GM12878 (cell line): ENCODE measurements at regions of chr11 and their contacts with region 1.

Region 1: DNA sequence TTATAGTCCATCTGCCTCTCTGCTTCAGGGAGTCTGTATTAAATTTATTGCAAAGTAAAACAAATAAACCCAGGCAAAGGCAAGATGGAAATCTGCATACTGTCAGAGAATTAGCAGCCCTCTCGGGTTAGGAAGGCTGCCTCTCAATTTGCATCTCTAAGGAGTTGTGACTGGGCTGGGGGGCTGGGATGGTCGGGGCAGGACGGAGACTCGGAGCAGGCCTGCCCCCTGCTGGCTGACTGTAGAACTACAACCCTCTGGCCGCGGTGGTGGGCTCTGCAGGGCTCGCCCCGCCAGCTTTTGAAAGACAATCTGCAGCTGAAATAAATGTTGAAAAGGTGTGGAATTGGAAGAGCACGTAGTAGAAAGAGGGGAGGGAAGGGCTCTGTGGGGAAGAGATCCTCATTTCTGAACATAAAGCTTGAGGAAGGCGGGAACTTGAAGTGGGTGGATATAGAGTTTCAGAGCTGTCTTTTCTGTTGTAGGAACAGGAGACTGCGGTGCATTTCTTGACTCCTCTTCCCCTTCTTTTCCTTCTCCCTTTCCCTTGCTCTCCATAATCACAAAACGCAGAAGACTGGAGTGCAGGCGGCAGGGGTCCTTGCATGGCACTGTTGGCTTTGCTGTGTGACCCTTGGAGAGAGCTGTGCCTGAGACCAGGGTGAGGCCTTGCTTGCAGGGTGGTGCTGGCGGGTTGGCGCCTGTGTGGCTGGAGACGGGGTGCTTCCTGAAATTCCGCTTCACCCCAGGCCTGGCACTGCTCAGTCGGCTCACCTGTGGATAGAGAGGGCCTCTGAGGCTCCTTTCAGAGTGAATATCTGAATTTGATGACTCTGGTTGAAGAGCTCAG is 22.6 kb upstream of the PKNOX2 start:
- DNase-seq: no peak
- ATAC-seq: peak; percentile 98
- H3K4me3 ChIP-seq: no peak overlapping the region
- H3K27ac ChIP-seq: no peak overlapping the region
- H3K4me1 ChIP-seq: no peaks in the 10 kb centered on the region
- H3K27me3 ChIP-seq: peaks cover 0 to 2% of the 10 kb centered on the region in 2 experiments; a peak in 1 of 4 replicates
- CTCF ChIP-seq: peak; percentile 88 to 94 (median 92)
- EP300 ChIP-seq: no peak
- POLR2A ChIP-seq: no peak
- RAD21 ChIP-seq: peak; percentile 78

Region 2: GRCh38 chr11:124882339-124883071 is 259.4 kb before region 1 on chr11:
- CTCF ChIA-PET with region 1: no interaction called
- POLR2A ChIA-PET with region 1: no interaction called
- RAD21 ChIA-PET with region 1: no interaction called
- SMC1A ChIA-PET with region 1: no interaction called
- in situ Hi-C with region 1: no loop called
- intact Hi-C with region 1: loop called (anchors 10 kb)
- DNase-seq: no peak
- ATAC-seq: no peak
- H3K4me3 ChIP-seq: no peak overlapping the region
- H3K27ac ChIP-seq: no peak overlapping the region
- H3K4me1 ChIP-seq: no peaks in the 10 kb centered on the region
- H3K27me3 ChIP-seq: peaks cover 0 to 4% of the 10 kb centered on the region in 2 experiments; a peak in 1 of 4 replicates
- CTCF ChIP-seq: no peak
- EP300 ChIP-seq: no peak
- POLR2A ChIP-seq: no peak
- RAD21 ChIP-seq: no peak

Region 3: DNA sequence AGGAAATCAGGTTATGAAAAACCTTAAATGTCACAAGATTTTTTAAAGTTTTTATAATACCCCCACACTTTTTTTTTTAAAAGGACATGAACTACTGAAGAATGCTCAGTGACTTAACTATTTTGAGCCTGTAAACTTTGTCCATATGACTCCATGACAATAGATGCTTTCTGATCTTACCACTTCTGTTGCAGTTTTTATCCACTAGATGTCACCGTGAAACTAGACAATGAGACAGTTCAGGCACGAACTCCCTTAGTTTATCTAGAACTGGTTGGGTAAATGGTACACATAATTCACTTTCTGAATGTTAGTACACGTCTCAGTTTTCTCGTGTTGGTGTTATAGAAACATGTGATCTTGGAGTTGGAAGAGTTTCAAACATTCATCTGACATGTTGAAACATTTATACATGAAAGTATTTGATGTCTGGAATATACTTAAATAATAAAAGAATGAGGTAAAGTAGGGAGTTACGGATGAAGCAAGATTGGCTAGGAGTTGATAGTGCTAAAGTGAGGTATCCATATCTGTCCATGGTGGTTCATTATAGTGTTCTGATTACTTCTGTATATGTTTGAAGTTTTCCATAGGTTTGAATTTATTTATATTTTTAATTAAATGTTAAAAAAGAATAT is 179.8 kb before region 1 on chr11:
- CTCF ChIA-PET with region 1: interaction called, 61 read pairs
- POLR2A ChIA-PET with region 1: no interaction called
- RAD21 ChIA-PET with region 1: interaction called, 32 read pairs
- SMC1A ChIA-PET with region 1: interaction called, 52 read pairs
- in situ Hi-C with region 1: loop called (anchors 10 kb)
- intact Hi-C with region 1: loop called (anchors 1 kb)
- DNase-seq: peak; percentile 51
- ATAC-seq: peak; percentile 97
- H3K4me3 ChIP-seq: no peak overlapping the region
- H3K27ac ChIP-seq: no peak overlapping the region
- H3K4me1 ChIP-seq: no peaks in the 10 kb centered on the region
- H3K27me3 ChIP-seq: no peaks in the 10 kb centered on the region
- CTCF ChIP-seq: peak; percentile 67 to 91 (median 74); a peak in 5 of 6 replicates
- EP300 ChIP-seq: no peak
- POLR2A ChIP-seq: no peak
- RAD21 ChIP-seq: peak; percentile 97

Region 4: DNA sequence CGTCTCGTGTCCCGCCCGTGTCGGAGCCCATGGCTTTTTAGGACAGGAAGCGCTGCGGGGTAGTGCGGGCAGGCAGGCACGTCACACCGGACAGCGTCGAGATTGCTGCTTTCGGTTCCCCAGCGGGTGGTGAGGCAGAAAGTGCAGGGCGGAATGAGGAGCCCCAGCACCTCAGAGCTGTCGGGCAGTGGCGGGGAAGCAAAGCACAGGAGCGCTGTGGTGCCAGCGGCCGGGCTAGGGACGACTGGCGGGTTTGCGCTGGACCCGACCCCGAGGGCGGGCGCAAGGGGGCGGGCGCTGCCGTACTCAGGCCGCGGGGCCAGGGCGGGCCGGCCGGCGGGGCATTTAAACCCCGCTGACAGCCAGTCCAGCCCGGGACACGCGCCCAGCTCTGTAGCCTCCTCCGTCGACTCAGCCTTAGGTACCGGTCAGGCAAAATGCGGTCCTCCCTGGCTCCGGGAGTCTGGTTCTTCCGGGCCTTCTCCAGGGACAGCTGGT is 78.9 kb before region 1 on chr11 and contains the start of gene SLC37A2:
- CTCF ChIA-PET with region 1: interaction called, 12 read pairs
- POLR2A ChIA-PET with region 1: no interaction called
- RAD21 ChIA-PET with region 1: interaction called, 5 read pairs
- SMC1A ChIA-PET with region 1: interaction called, 8 read pairs
- in situ Hi-C with region 1: no loop called
- intact Hi-C with region 1: loop called (anchors 5 kb)
- DNase-seq: peak; percentile 62
- ATAC-seq: peak; percentile 94
- H3K4me3 ChIP-seq: peak within 1 kb of the TSS; percentile 77
- H3K27ac ChIP-seq: no peak within 1 kb of the TSS
- H3K4me1 ChIP-seq: peaks cover 4% of the 10 kb centered on the region; the same call in 1 of the 2 replicates
- H3K27me3 ChIP-seq: no peaks in the 10 kb centered on the region; a peak in 1 of 4 replicates
- CTCF ChIP-seq: peak in 2 of 3 experiments; percentile 18 to 39; a peak in 3 of 6 replicates
- EP300 ChIP-seq: peak in 1 of 2 experiments; percentile 64; a peak in 1 of 4 replicates
- POLR2A ChIP-seq: peak; percentile 94
- RAD21 ChIP-seq: no peak
- polyA plus RNA-seq, gene SLC37A2: 0.26 to 0.29 TPM

Region 5: GRCh38 chr11:125111343-125112207 is 30.3 kb before region 1 on chr11 and contains the start of gene TMEM218:
- CTCF ChIA-PET with region 1: interaction called, 53 read pairs
- POLR2A ChIA-PET with region 1: no interaction called
- RAD21 ChIA-PET with region 1: interaction called, 4 read pairs
- SMC1A ChIA-PET with region 1: interaction called, 16 read pairs
- in situ Hi-C with region 1: no loop called
- intact Hi-C with region 1: no loop called
- DNase-seq: peak; percentile 100
- ATAC-seq: peak; percentile 99
- H3K4me3 ChIP-seq: peak within 1 kb of the TSS; percentile 96
- H3K27ac ChIP-seq: peak within 1 kb of the TSS; percentile 49
- H3K4me1 ChIP-seq: no peaks in the 10 kb centered on the region; the same call in 1 of the 2 replicates
- H3K27me3 ChIP-seq: no peaks in the 10 kb centered on the region
- CTCF ChIP-seq: no peak
- EP300 ChIP-seq: no peak
- POLR2A ChIP-seq: peak; percentile 76
- RAD21 ChIP-seq: no peak
- polyA plus RNA-seq, gene TMEM218: 11.2 to 15.5 TPM

Region 6: DNA sequence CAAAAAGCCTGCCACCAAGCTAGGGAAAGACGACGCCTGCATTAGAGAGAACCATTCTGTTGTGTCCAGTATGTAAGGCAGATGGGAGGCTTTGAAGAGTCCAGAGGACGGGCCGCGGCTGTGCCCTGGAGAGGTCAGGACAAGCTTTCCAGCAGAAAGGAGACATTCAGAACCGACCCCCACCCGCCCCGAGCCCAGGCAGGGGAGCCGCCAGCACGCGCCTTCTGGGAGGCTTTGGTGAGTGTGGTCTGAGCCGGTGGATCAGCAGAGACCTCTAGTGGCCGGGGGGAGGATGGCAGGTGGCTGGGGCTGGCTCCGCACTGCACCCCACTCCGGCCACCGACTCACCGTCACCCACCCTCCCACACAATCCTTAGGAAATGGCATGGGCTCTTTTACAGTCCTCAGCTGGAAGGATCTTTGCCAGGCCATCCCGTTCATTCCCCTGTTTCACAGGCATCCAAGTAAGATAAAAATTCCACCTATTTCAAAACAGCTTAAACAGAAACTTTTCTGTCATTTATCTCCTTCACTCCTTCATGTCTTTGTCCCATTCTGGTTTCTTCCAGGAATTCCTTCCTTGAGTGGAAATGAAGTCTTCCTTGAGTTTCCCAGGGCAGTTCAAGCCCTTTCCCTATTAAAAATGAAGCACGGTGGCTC is 263.0 kb after region 1 on chr11:
- CTCF ChIA-PET with region 1: interaction called, 12 read pairs
- POLR2A ChIA-PET with region 1: no interaction called
- RAD21 ChIA-PET with region 1: interaction called, 7 read pairs
- SMC1A ChIA-PET with region 1: interaction called, 4 read pairs
- in situ Hi-C with region 1: no loop called
- intact Hi-C with region 1: no loop called
- DNase-seq: no peak
- ATAC-seq: peak; percentile 97
- H3K4me3 ChIP-seq: no peak overlapping the region
- H3K27ac ChIP-seq: no peak overlapping the region
- H3K4me1 ChIP-seq: no peaks in the 10 kb centered on the region
- H3K27me3 ChIP-seq: peaks cover 4 to 12% of the 10 kb centered on the region in 2 experiments
- CTCF ChIP-seq: peak; percentile 89 to 98 (median 92)
- EP300 ChIP-seq: no peak
- POLR2A ChIP-seq: no peak
- RAD21 ChIP-seq: peak; percentile 75